Activated CD4-positive, alpha-beta T cell treated with anti-CD3 and anti-CD28 coated beads, Interleukin-2, amount 10 ng/mL, durations not matched to agents 7 days and 5 days (primary cell): ENCODE measurements at regions of chr20 and their contacts with region 1.

Region 1: DNA sequence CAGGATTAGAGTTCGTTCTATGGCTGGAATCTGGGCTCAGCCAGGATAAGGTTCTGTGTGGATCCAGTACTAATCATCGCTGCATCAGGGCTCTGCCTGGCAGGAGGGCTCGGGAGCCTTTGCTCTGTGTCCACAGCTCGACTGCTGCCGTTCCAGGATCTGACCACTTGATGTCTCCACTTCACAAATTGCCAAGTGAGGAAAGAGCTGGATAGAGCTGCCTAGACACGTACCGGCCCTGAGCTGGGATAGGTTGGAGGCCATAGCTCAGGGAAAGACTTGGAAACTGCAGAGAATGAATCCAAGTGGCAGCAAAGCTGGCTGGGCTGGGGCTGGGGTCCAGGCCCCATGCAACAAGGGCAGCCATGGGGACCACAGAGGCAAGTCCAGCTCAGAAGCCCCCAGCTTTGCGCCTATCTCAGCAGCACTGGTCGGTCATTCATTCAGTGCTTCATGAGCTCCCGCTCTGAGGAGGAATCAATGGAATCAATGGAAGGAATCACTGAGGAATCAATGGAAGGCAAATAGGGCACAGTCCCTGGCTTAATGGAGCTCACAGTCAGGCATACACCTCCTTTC is 38.0 kb upstream of the TOP1 start:
- DNase-seq: peak; percentile 75
- H3K4me3 Mint-ChIP-seq: no peak overlapping the region
- H3K27ac Mint-ChIP-seq: peak overlapping the region; percentile 80
- H3K4me1 Mint-ChIP-seq: peaks cover 37% of the 10 kb centered on the region
- H3K27me3 Mint-ChIP-seq: no peaks in the 10 kb centered on the region

Region 2: DNA sequence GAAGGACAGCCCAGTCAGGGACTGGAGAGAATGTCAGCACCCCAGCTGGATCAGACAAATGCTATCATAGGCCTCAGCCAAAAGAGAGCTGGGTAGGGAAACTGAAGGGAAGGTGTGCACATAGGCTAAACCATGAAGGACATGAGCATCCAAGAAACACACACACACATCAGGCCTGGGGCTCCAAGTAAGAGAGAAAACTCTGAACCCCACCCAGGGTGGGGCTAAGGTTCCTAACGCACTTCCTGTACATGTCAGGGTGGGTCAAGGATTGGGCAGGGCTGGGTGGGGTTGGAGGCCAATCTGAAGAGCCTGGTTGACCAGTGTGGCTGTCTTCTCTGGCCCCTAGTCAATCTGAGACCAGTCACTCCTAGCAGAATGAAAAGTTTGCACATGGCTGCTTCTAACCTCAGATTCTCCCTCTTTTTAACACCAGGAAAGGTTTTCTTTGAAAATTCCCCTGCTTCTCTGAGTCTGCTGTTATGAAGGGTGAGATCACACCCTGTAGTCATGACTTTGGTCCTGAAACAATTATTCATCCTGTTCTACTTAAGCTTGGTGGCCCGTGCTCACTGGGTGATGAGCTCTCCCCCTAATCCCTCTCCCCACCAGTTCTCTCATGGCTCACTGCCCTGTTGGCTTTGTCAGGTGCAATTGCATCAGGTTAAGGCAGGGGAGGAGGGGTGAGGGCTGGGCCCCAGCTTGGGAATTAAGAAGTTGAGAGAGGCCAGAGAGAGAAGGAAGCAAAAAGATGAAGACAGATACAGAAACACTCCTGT is 390.0 kb before region 1 on chr20:
- CTCF ChIA-PET with region 1: no interaction called
- POLR2A ChIA-PET with region 1: no interaction called
- DNase-seq: no peak
- H3K4me3 Mint-ChIP-seq: no peak overlapping the region
- H3K27ac Mint-ChIP-seq: no peak overlapping the region
- H3K4me1 Mint-ChIP-seq: no peaks in the 10 kb centered on the region
- H3K27me3 Mint-ChIP-seq: peaks cover 7% of the 10 kb centered on the region

Region 3: GRCh38 chr20:40835321-40835720 is 155.3 kb before region 1 on chr20:
- CTCF ChIA-PET with region 1: no interaction called
- POLR2A ChIA-PET with region 1: no interaction called
- DNase-seq: no peak
- H3K4me3 Mint-ChIP-seq: no peak overlapping the region
- H3K27ac Mint-ChIP-seq: no peak overlapping the region
- H3K4me1 Mint-ChIP-seq: no peaks in the 10 kb centered on the region
- H3K27me3 Mint-ChIP-seq: peaks cover 12% of the 10 kb centered on the region

Region 4: DNA sequence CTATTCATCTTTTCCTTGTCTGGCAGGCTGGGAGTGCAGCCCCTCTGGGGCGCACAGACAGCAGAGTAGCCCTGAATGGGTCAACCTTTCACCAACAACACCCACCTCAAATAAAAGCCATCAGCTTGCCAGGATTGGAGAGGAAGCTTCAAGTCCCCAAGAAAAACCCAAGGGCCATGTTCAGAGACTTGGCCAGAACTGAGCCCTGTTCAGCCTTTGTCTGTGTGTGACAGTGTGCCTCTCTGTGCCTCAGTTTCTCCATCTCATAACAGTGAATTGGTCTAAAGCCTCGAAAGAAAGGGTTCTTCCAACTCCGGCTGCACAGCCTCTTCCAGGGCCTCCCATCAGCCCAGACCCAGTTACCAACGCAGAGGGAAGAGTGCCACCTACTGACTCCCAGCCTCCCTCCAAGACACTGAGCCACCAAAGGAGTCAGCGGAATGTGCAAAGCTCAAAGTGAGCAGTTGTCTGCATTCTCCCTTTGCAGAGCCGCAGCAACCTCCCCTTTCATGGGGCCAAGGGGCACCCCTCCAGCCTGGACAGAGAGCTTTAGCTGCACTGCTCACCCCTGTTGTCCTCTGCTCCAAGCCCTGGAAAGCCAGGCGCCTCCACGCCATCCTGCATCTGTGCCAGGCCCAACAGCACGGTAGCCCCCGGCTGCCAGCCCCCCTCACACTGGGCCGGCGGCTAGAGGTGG is 44.7 kb before region 1 on chr20:
- CTCF ChIA-PET with region 1: no interaction called
- POLR2A ChIA-PET with region 1: no interaction called
- DNase-seq: peak; percentile 16
- H3K4me3 Mint-ChIP-seq: no peak overlapping the region
- H3K27ac Mint-ChIP-seq: no peak overlapping the region
- H3K4me1 Mint-ChIP-seq: no peaks in the 10 kb centered on the region
- H3K27me3 Mint-ChIP-seq: peaks cover 2% of the 10 kb centered on the region

Region 5: DNA sequence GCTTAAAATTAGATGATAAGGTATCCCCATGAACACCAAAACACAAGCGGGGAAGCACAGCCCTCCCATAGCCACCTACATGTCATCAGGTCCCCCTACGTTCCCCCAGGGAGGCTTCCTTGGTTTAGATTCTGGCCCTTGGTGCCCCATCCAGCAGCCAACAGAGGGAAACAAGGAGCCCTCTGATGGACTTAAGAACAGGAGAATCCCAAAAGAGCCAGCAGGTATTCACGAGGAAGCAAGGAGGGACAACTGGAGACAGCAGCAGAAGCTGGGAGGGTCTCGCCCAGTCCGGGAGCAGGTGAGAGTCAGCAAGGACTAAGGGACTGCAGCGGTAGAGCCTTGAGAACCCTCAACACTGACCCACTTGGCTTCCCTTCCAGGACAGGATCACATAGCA is 20.4 kb before region 1 on chr20:
- CTCF ChIA-PET with region 1: interaction called, 18 read pairs
- POLR2A ChIA-PET with region 1: no interaction called
- DNase-seq: no peak
- H3K4me3 Mint-ChIP-seq: no peak overlapping the region
- H3K27ac Mint-ChIP-seq: no peak overlapping the region
- H3K4me1 Mint-ChIP-seq: peaks cover 12% of the 10 kb centered on the region
- H3K27me3 Mint-ChIP-seq: peaks cover 39% of the 10 kb centered on the region

Region 6: GRCh38 chr20:40980106-40980827 is 10.4 kb before region 1 on chr20:
- CTCF ChIA-PET with region 1: interaction called, 23 read pairs
- POLR2A ChIA-PET with region 1: no interaction called
- DNase-seq: no peak
- H3K4me3 Mint-ChIP-seq: no peak overlapping the region
- H3K27ac Mint-ChIP-seq: no peak overlapping the region
- H3K4me1 Mint-ChIP-seq: no peaks in the 10 kb centered on the region
- H3K27me3 Mint-ChIP-seq: peaks cover 35% of the 10 kb centered on the region

Region 7: GRCh38 chr20:41003143-41003883 is 12.7 kb after region 1 on chr20:
- CTCF ChIA-PET with region 1: interaction called, 28 read pairs
- POLR2A ChIA-PET with region 1: no interaction called
- DNase-seq: peak; percentile 51
- H3K4me3 Mint-ChIP-seq: no peak overlapping the region
- H3K27ac Mint-ChIP-seq: peak overlapping the region; percentile 89
- H3K4me1 Mint-ChIP-seq: peaks cover 37% of the 10 kb centered on the region
- H3K27me3 Mint-ChIP-seq: no peaks in the 10 kb centered on the region

Region 8: DNA sequence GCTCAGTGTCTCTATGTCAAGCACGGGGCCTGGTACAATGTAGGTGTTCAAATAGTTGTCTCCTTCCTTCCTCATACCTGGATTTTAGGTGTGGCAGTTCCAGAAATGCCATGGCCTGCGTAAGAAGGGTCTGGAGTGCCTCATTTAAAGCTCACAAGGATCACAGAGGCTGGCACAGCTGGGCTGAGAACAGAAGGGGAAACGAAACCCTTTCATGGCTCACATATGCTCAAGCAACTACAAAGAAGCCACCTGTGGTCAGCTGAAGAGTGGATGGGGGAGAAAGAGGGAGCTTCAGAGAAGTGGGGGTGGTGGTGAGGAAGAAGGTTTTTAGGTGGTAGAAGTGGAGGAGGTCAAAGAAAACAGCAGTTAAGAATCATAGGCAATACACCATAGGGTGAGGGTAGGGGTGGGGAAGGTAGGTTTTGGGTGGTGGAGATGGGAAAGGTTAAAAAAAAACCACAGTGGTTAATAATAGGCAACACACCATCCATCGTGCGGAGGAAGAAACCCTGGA is 21.0 kb after region 1 on chr20:
- CTCF ChIA-PET with region 1: interaction called, 17 read pairs
- POLR2A ChIA-PET with region 1: no interaction called
- DNase-seq: peak; percentile 56
- H3K4me3 Mint-ChIP-seq: peak overlapping the region; percentile 6
- H3K27ac Mint-ChIP-seq: peak overlapping the region; percentile 57
- H3K4me1 Mint-ChIP-seq: peaks cover 42% of the 10 kb centered on the region
- H3K27me3 Mint-ChIP-seq: no peaks in the 10 kb centered on the region

Region 9: GRCh38 chr20:41030531-41031244 is 40.1 kb after region 1 on chr20:
- CTCF ChIA-PET with region 1: interaction called, 10 read pairs
- POLR2A ChIA-PET with region 1: no interaction called
- DNase-seq: no peak
- H3K4me3 Mint-ChIP-seq: peak overlapping the region; percentile 84
- H3K27ac Mint-ChIP-seq: peak overlapping the region; percentile 31
- H3K4me1 Mint-ChIP-seq: peaks cover 68% of the 10 kb centered on the region
- H3K27me3 Mint-ChIP-seq: no peaks in the 10 kb centered on the region

Region 10: DNA sequence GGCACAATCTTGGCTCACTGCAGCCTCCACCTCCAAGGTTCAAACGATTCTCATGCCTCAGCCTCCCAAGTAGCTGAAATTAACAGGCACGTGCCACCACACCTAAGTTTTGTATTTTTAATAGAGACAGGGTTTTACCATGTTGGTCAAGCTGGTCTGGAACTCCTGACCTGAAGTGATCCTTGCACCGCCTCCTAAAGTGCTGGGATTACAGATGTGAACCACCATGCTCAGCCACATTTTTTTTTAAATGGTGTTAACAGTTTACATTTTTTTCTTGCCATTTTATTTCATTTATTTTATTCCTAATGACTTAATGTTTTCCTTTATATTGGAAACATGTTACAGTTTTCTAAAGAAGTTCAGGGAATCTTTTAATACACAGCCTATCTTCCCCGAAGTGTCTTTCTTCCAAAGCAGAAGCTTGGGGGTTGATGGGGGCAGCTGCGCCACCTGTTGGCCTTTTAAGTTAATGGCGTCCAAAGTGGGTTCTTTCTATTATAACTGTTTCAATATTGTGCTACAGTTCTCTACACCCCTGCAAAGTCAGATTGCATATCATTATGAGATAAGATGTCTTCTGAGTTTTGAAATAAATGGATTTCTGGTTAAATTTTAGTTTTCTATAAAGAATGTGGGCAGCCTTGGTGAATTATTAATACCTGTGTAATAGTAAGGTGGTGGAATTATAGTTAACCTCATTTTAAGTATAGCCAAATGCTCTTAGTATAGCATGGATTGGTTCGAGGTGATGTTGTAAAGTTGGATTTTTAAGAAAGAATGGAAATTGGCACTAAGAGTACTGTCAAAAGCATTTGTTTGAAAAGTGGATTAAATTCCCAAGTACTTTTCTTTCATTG is 104.7 kb after region 1 on chr20:
- CTCF ChIA-PET with region 1: interaction called, 52 read pairs
- POLR2A ChIA-PET with region 1: interaction called, 3 read pairs
- DNase-seq: peak; percentile 57
- H3K4me3 Mint-ChIP-seq: no peak overlapping the region
- H3K27ac Mint-ChIP-seq: no peak overlapping the region
- H3K4me1 Mint-ChIP-seq: peaks cover 5% of the 10 kb centered on the region
- H3K27me3 Mint-ChIP-seq: no peaks in the 10 kb centered on the region